Kidney (tissue), 22 donors: ENCODE measurements at regions of chr6 and their contacts with region 1.

Region 1: GRCh38 chr6:30447237-30447636 is 42.1 kb upstream of the HLA-E start:
- DNase-seq: peak in 2 of 5 donors; percentile 26 to 47
- H3K4me3 ChIP-seq: no peak overlapping the region
- H3K27ac ChIP-seq: no peak overlapping the region
- H3K4me1 ChIP-seq: no peaks in the 10 kb centered on the region
- H3K27me3 ChIP-seq: peaks cover 65% of the 10 kb centered on the region
- CTCF ChIP-seq: no peak

Region 2: GRCh38 chr6:30378290-30378937 is 68.8 kb before region 1 on chr6:
- intact Hi-C with region 1: loop called (anchors 10 kb)
- DNase-seq: peak in 3 of 5 donors; percentile 26 to 75 (median 73)
- H3K4me3 ChIP-seq: no peak overlapping the region
- H3K27ac ChIP-seq: no peak overlapping the region
- H3K4me1 ChIP-seq: no peaks in the 10 kb centered on the region
- H3K27me3 ChIP-seq: no peaks in the 10 kb centered on the region
- CTCF ChIP-seq: no peak

Region 3: GRCh38 chr6:30955367-30956042 is 508.3 kb after region 1 on chr6:
- intact Hi-C with region 1: no loop called
- DNase-seq: peak; percentile 81 to 91 (median 82)
- H3K4me3 ChIP-seq: peak overlapping the region; percentile 40 to 53 (median 44)
- H3K27ac ChIP-seq: no peak overlapping the region
- H3K4me1 ChIP-seq: no peaks in the 10 kb centered on the region
- H3K27me3 ChIP-seq: no peaks in the 10 kb centered on the region
- CTCF ChIP-seq: no peak